ENCODE measurements at regions of chr5 and their contacts with region 1.

Region 1: DNA sequence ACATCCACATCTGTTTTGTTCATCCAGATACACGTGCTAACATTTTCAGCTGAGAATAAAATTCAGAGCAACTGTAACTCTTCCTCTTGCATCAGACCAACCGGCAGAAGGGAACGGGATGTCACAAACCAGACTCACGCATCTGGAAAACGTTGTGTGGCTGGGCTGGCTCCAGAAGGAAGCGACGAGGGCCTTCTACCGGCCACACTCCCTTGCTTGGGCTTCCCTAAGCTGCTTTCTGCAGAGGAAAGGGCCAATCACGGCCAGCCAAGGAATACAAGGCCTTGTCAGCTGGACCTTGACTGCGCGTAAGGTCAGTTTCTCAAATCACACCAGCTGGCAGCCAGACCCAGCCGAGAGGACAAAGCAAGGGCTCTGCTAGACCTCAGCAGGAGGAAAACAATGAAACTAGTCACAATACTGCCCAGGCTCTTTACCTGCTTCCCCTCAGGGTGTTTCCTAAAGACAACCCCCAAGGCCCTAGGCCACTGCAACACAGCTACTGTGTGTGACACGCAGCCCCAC is 106.1 kb downstream of the THBS4 start:
- DNase-seq: peak; percentile 92
- ATAC-seq: peak; percentile 96

Region 2: DNA sequence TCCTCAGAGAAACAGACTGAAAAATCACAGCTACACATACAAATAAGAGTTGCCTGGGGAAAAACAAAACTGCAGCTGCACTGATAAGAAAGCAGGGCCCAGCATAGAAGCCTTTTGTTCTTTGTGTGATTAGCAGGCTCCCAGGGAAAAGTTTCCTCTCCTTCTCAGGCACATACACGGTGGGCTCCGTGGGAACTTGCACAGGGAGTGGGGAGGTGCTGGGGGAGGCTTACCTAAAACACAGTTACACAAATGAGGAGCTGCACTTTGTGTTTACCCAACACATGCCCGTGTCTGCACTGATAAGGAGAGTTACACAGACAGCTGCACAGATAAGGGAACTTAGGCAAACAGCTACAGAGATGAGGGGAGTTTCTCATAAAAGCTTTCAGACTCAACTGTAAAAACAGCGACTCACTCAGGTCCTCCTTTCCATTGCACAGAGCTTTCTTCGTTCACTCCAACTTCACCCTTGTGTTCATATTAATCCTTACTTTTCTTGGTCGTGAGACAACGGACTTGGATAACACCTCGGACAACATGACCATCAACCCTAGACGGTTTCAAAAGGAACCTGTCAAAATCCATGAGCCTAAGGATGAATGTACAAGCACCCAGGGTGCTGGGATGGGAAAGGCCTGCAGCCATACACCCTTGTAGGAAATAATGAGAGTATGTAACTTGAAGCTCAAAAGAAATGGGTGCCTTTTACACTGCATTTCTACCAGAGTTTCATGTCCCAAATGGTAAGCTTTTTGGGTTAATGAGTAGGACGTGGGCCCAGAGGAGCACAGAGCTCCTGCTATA is 63.8 kb after region 1 on chr5:
- intact Hi-C with region 1: loop called (anchors 10 kb)
- DNase-seq: no peak
- ATAC-seq: peak; percentile 65